CD8-positive, alpha-beta memory T cell (primary cell): ENCODE measurements at regions of chr1 and their contacts with region 1.

Region 1: DNA sequence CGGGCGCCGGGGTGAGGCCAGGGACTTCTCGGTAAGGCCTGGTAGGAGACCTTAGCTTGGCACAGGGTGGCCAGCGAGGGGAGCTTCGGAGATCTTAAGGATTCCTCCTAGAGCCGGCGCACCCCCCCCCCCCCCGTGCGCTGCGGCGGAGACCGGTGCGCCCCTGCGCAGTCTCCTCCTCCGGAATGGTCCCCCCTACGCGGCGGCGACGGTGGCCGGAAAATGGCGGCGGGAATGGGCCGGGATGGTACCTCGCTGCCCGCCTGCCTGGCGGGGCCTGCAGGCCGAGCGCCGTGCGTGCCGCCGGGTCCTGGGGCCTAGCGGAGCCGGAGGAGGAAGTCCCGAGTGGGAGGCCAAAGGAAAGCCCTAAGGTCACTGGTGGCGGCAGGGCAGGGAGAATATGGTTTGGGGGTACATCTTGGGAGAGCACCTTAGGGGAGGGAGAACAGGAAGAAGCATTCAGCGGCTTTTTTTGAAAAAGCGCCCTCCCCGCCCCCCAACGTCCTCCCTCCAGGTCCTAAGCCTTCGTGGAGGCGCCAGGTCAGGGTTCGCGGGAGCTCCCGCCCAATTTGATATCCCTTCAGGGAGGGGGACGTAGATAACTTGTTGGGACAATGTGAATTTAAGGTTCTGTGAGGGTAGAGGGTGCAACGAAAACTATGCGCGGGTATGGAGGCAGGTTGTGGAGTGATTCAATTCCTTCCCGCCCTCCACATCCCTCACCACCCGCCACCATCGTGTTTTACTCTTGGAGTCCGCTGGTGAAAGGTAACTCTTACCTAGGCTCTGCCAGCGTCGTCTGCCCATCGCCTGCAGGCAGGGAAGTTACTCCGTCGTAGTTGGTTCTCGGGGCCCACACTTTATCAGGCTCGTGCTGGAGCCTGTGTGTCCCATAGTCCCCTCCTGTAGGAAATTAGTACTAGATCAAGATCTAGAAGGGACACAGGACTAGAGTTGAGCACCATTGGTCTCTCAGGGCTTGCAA is 552 bp downstream of the SRRM1 start:
- DNase-seq: peak in 3 of 5 donors; percentile 6 to 70 (median 34)
- H3K4me3 ChIP-seq: peak overlapping the region; percentile 81
- H3K4me3 Mint-ChIP-seq: peak overlapping the region; percentile 92 to 98 (median 94)
- H3K27ac ChIP-seq: peak overlapping the region; percentile 81
- H3K27ac Mint-ChIP-seq: peak overlapping the region; percentile 90 to 100 (median 96)
- H3K4me1 ChIP-seq: peaks cover 29% of the 10 kb centered on the region
- H3K4me1 Mint-ChIP-seq: peaks cover 46 to 54% (median 48%) of the 10 kb centered on the region in 3 donors
- H3K27me3 ChIP-seq: no peaks in the 10 kb centered on the region
- H3K27me3 Mint-ChIP-seq: no peaks in the 10 kb centered on the region

Region 2: GRCh38 chr1:24619376-24619775 is 24.3 kb before region 1 on chr1:
- CTCF ChIA-PET with region 1: no interaction called
- POLR2A ChIA-PET with region 1: no interaction called
- DNase-seq: no peak
- H3K4me3 ChIP-seq: no peak overlapping the region
- H3K4me3 Mint-ChIP-seq: no peak overlapping the region
- H3K27ac ChIP-seq: no peak overlapping the region
- H3K27ac Mint-ChIP-seq: no peak overlapping the region
- H3K4me1 ChIP-seq: no peaks in the 10 kb centered on the region
- H3K4me1 Mint-ChIP-seq: no peaks in the 10 kb centered on the region
- H3K27me3 ChIP-seq: no peaks in the 10 kb centered on the region
- H3K27me3 Mint-ChIP-seq: peaks cover 14 to 51% of the 10 kb centered on the region in 2 donors

Region 3: DNA sequence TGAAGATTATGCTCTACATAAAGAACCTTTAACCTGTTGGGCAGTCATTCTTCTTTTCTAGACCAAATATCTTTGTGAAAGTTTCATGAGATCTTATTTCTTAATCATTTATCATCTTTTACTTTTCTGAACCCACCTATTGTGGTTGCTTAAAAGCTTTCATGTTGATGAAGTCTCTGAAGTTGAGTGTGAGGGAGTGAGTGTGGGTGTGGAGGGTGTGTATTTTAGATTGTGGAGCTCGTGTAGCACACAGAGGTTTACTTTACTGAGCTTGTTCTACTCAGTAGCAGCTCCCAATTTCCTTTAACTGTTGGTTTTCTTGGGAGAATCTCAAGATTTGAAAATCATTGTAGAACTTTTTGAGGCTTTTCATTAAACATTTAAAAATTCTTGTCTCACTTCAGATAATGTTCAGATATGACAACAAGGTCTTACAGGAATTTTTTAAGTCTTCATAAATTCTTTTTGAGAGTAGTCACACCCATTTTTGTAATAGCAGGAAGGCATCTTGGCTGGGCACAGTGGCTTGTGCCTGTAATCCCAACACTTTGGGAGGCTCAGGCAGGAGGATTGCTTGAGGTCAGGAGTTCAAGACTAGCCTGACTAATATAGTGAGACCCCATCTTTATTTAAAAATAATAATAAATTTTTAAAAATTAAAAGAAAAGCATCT is 16.5 kb after region 1 on chr1:
- CTCF ChIA-PET with region 1: interaction called, 3 read pairs
- POLR2A ChIA-PET with region 1: interaction called, 12 read pairs
- DNase-seq: no peak
- H3K4me3 ChIP-seq: no peak overlapping the region
- H3K4me3 Mint-ChIP-seq: no peak overlapping the region
- H3K27ac ChIP-seq: no peak overlapping the region
- H3K27ac Mint-ChIP-seq: peak overlapping the region in 4 of 8 donors; percentile 1 to 88 (median 74)
- H3K4me1 ChIP-seq: peaks cover 17% of the 10 kb centered on the region
- H3K4me1 Mint-ChIP-seq: peaks cover 26 to 43% (median 37%) of the 10 kb centered on the region in 3 donors
- H3K27me3 ChIP-seq: no peaks in the 10 kb centered on the region
- H3K27me3 Mint-ChIP-seq: no peaks in the 10 kb centered on the region